ENCODE measurements at regions of chr1 and their contacts with region 1.

Region 1: DNA sequence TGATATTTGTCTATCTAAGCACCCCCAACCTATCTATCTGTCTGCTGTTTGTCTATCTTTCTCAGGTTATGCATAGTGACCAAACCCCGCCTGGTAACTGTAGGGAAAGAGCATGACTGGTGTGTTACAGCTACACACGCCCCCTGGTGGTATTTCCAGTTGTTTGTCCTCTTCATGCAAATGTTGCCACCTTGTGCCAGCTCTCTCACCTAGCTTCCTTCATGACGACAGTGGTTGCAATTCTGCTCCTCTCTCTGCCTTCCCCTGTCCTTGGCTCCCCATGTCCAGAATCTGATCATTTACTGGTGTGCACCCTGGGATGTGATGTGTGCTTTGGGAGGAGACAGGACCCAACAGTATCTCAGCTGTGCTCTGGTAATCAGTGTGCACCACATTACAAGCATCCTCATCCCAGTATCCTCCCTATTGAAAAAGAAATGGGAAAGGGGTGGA is 8.1 kb upstream of the INKA2 start:
- DNase-seq: peak; percentile 65
- ATAC-seq: peak; percentile 73
- H3K4me3 Mint-ChIP-seq: no peak overlapping the region
- H3K27ac Mint-ChIP-seq: no peak overlapping the region; the same call in 1 of the 2 replicates
- H3K4me1 Mint-ChIP-seq: peaks cover 31% of the 10 kb centered on the region
- H3K27me3 Mint-ChIP-seq: peaks cover 12% of the 10 kb centered on the region
- CTCF ChIP-seq: peak; percentile 72

Region 2: GRCh38 chr1:111725192-111725591 is 22.1 kb before region 1 on chr1:
- CTCF ChIA-PET with region 1: interaction called, 10 read pairs
- POLR2A ChIA-PET with region 1: no interaction called
- DNase-seq: no peak
- ATAC-seq: peak; percentile 16
- H3K4me3 Mint-ChIP-seq: no peak overlapping the region
- H3K27ac Mint-ChIP-seq: no peak overlapping the region
- H3K4me1 Mint-ChIP-seq: peaks cover 64% of the 10 kb centered on the region
- H3K27me3 Mint-ChIP-seq: no peaks in the 10 kb centered on the region
- CTCF ChIP-seq: no peak